ENCODE measurements at regions of chr10 and their contacts with region 1.

Region 1: GRCh38 chr10:86376852-86377796 is 10.5 kb upstream of the GRID1 start:
- DNase-seq: peak; percentile 52
- H3K4me3 ChIP-seq: peak overlapping the region in 1 of 3 experiments; percentile 32
- H3K27ac ChIP-seq: no peak overlapping the region
- H3K4me1 ChIP-seq: peaks cover 4% of the 10 kb centered on the region
- H3K27me3 ChIP-seq: no peaks in the 10 kb centered on the region
- CTCF ChIP-seq: peak; percentile 89 to 93

Region 2: GRCh38 chr10:84783386-84783785 is 1593.7 kb before region 1 on chr10:
- CTCF ChIA-PET with region 1: no interaction called
- dilution Hi-C with region 1: no loop called
- in situ Hi-C with region 1: loop called in 1 of 2 experiments (anchors 10 kb)
- intact Hi-C with region 1: loop called (anchors 1 kb)
- DNase-seq: peak; percentile 24
- H3K4me3 ChIP-seq: no peak overlapping the region
- H3K27ac ChIP-seq: no peak overlapping the region
- H3K4me1 ChIP-seq: no peaks in the 10 kb centered on the region
- H3K27me3 ChIP-seq: no peaks in the 10 kb centered on the region
- CTCF ChIP-seq: peak; percentile 82 to 90

Region 3: GRCh38 chr10:84924131-84924530 is 1453.0 kb before region 1 on chr10:
- CTCF ChIA-PET with region 1: no interaction called
- dilution Hi-C with region 1: no loop called
- in situ Hi-C with region 1: no loop called
- intact Hi-C with region 1: loop called (anchors 2 kb)
- DNase-seq: no peak
- H3K4me3 ChIP-seq: no peak overlapping the region
- H3K27ac ChIP-seq: no peak overlapping the region
- H3K4me1 ChIP-seq: no peaks in the 10 kb centered on the region
- H3K27me3 ChIP-seq: no peaks in the 10 kb centered on the region
- CTCF ChIP-seq: no peak

Region 4: DNA sequence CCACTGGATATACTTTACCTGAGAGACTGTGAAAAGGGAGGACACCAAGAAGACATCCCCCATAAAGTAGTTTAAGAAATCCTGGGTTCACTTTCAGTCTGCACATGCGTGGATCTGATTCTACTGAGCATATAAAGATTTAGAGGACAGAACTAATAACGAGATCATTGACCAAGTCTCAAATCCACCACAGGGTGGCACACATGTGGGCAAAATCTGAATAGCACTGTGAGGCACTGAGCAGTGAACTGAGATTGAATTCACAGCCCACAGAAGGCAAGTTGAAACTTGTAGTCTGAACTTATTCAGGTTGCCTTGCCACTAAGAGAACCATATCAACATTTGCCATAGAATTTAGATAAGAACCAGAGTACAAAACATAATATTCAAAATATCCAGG is 829.1 kb before region 1 on chr10:
- CTCF ChIA-PET with region 1: no interaction called
- dilution Hi-C with region 1: no loop called
- in situ Hi-C with region 1: loop called (anchors 10 to 25 kb)
- intact Hi-C with region 1: loop called (anchors 1 kb)
- DNase-seq: peak; percentile 76
- H3K4me3 ChIP-seq: no peak overlapping the region
- H3K27ac ChIP-seq: no peak overlapping the region
- H3K4me1 ChIP-seq: peaks cover 8% of the 10 kb centered on the region
- H3K27me3 ChIP-seq: no peaks in the 10 kb centered on the region
- CTCF ChIP-seq: peak; percentile 74

Region 5: DNA sequence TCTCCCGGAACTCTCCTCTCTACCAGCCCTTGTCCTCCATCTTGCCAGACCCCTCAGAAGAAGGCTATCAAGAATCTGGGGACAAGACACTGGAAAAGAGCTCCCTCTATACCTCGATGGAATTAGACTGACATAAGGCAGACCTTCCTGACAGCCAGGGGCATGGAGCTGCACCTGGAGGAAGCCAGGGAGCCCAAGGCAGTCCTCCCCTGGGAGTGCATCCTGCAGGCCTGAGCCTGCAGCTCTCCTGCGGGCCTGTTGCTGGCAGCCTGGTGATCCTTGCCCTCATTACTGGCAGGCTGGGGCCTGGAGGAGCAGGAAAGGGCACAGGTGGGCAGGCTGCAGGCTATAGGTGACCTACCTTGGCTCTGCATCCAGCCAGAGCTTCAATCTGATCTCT is 333.9 kb before region 1 on chr10:
- CTCF ChIA-PET with region 1: no interaction called
- dilution Hi-C with region 1: no loop called
- in situ Hi-C with region 1: no loop called
- intact Hi-C with region 1: no loop called
- DNase-seq: no peak
- H3K4me3 ChIP-seq: no peak overlapping the region
- H3K27ac ChIP-seq: no peak overlapping the region
- H3K4me1 ChIP-seq: no peaks in the 10 kb centered on the region
- H3K27me3 ChIP-seq: no peaks in the 10 kb centered on the region
- CTCF ChIP-seq: no peak

Region 6: GRCh38 chr10:86521678-86522509 is 144.8 kb after region 1 on chr10 and contains the start of gene WAPL:
- CTCF ChIA-PET with region 1: no interaction called
- dilution Hi-C with region 1: no loop called
- in situ Hi-C with region 1: no loop called
- intact Hi-C with region 1: no loop called
- DNase-seq: peak; percentile 92
- H3K4me3 ChIP-seq: peak within 1 kb of the TSS; percentile 84 to 96 (median 96)
- H3K27ac ChIP-seq: peak within 1 kb of the TSS; percentile 77
- H3K4me1 ChIP-seq: peaks cover 10% of the 10 kb centered on the region
- H3K27me3 ChIP-seq: no peaks in the 10 kb centered on the region
- CTCF ChIP-seq: no peak
- total RNA-seq, gene WAPL: 37.5 to 37.8 TPM

Region 7: DNA sequence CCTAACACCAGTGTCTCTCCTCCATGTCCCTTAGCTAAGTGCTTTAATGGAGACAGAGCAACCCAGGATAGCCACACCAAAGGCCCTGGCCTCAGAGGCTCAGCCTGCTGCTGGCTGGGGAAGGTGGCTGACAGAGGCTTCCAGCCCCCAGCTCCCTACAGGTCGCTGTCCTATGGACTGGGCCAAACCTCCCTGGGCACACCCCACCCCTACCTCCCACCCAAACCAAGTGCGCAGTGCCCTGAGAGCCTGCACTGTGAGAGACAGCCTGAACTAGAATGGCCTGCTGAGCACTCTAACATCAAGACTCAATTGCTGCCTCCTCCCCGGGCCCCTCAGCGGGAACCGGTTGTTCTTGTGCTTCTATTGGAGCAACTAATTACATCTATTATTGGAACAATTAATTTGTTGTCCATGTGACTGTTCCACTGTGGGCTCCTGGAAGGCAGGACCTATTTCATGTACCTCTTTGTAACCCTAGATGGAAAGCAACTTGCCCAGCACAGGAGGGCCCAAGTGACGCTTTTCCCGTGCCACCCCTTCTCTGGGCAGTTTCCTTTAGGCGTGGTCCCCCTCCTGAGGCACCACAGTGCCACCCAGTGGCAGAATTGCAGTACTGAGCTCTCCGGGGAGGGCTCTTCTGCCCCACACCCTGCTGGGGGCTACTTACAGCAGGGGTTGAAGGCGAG is 208.1 kb after region 1 on chr10:
- CTCF ChIA-PET with region 1: no interaction called
- dilution Hi-C with region 1: no loop called
- in situ Hi-C with region 1: no loop called
- intact Hi-C with region 1: loop called (anchors 1 kb)
- DNase-seq: peak; percentile 44
- H3K4me3 ChIP-seq: no peak overlapping the region
- H3K27ac ChIP-seq: no peak overlapping the region
- H3K4me1 ChIP-seq: no peaks in the 10 kb centered on the region
- H3K27me3 ChIP-seq: no peaks in the 10 kb centered on the region
- CTCF ChIP-seq: peak; percentile 85 to 96